ENCODE measurements at regions of chr11 and their contacts with region 1.

Region 1: DNA sequence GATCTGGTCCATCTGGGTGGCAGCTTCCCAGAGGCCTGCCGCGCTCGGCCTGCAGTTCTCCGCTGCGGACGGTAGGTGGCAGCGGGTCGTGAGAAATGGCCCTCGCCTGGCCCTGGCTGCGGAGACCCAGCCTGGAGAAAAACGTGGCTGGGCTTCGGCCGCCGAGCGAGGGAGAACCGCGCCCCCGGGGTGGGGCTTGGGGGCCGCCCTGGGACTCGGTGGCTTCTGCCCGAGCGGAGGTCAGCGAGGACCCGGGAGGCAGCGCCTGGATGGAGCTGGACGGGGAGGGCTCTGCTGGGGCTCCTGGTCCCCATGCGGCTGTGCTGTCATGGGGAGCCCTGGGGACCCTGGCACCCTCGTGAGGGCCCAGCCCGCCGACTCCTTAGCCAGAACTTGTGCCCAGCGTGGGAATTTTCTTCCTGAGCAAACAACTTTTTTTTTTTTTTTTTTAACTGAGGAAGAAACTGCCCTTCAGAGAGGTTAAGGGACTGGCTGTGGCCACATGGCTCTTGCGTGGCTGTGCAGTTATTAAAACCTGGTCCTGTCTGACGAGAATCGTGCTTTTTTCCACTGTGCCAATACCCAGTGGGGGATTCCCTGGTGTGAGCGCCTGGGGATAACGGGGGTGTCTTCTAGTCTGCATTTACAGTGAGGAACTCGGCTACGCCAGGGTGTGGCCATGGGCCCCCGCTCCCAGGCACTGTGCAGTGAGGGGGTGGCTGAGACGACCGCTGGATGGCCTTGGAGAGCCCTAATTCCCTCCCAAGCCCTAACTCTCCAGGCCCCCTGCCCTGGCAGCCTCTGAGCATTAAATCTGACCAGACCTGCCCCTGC is 535.6 kb downstream of the INSC start:
- DNase-seq: peak; percentile 86 to 99
- H3K4me3 ChIP-seq: peak overlapping the region in 3 of 4 experiments; percentile 16 to 50 (median 24); a peak in 4 of 8 replicates
- H3K27ac ChIP-seq: no peak overlapping the region
- H3K4me1 ChIP-seq: peaks cover 3 to 13% (median 4%) of the 10 kb centered on the region in 4 experiments
- H3K27me3 ChIP-seq: peaks cover 0 to 4% (median 0%) of the 10 kb centered on the region in 4 experiments; a peak in 1 of 7 replicates
- CTCF ChIP-seq: peak; percentile 92 to 94 (median 92)
- EP300 ChIP-seq: peak in 1 of 2 experiments; percentile 84; a peak in 1 of 3 replicates
- POLR2A ChIP-seq: 0 out of 3 replicates have a peak, but pooled peaks of 1 of the 2 experiments have one; percentile 40
- RAD21 ChIP-seq: peak; percentile 89 to 93

Region 2: DNA sequence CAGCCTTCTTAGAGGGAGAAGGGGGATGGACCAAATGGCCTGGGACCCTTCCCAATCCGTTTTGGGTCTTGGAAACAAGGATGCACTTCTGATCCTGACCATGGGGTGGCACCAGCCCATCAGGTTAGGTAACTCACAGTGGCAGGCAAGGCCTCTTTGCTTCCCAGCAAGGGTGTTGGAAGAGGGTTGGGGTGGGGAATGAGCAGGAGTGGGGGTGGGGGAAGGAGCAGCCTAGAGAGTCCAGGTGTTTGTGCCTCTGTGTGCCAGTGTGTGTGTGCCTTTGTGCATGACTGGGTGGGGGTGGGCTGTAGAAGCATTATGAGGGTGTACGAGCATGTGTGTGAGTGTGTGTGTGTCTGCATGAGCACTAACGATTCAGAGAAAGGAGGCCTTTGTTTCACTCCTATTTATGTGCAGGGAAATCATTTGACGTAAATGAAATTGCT is 322.5 kb before region 1 on chr11:
- CTCF ChIA-PET with region 1: interaction called, 11 read pairs
- POLR2A ChIA-PET with region 1: no interaction called
- DNase-seq: peak; percentile 60 to 96
- H3K4me3 ChIP-seq: no peak overlapping the region
- H3K27ac ChIP-seq: no peak overlapping the region
- H3K4me1 ChIP-seq: peaks cover 0 to 3% (median 1%) of the 10 kb centered on the region in 4 experiments; a peak in 2 of 7 replicates
- H3K27me3 ChIP-seq: no peaks in the 10 kb centered on the region; a peak in 2 of 7 replicates
- CTCF ChIP-seq: peak; percentile 86 to 90 (median 89)
- EP300 ChIP-seq: no peak
- POLR2A ChIP-seq: no peak
- RAD21 ChIP-seq: peak; percentile 98 to 99

Region 3: DNA sequence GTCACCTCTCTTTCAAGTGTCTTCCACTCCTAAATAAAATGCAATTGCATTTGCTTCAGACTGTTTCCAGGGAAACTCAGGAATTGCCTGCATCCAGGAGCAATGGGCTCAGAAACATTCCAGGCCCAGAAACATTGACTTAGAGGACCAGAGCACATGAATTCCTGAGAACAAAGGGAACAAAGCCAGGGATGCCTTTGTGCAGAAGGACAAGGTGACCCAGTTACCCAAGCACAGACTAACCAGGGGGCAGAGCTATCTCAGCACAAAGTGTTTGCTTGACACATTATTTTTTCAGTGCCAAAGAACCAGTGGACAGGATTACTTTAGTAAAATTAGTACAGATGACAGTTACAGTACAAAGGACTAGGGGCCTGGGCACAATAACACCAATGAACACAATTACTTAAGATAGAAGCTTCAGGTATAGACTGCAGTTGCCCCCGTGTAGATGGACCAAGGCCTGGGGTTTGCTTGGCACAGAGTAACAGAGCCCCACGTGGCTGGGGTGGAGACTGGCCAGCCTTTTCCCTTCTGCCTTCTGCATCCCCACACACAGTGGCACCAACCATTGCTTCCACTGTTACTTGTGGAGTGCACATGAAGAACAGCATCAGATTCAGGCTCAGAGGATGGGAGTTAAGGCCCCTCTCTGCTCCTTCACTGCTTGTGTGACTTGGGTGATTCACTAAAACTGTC is 34.8 kb before region 1 on chr11:
- CTCF ChIA-PET with region 1: interaction called, 11 read pairs
- POLR2A ChIA-PET with region 1: no interaction called
- DNase-seq: no peak
- H3K4me3 ChIP-seq: no peak overlapping the region
- H3K27ac ChIP-seq: no peak overlapping the region
- H3K4me1 ChIP-seq: no peaks in the 10 kb centered on the region
- H3K27me3 ChIP-seq: no peaks in the 10 kb centered on the region
- CTCF ChIP-seq: no peak
- EP300 ChIP-seq: no peak
- POLR2A ChIP-seq: no peak
- RAD21 ChIP-seq: peak in 1 of 2 experiments; percentile 20; a peak in 1 of 4 replicates

Region 4: GRCh38 chr11:15629690-15630321 is 20.5 kb before region 1 on chr11:
- CTCF ChIA-PET with region 1: interaction called, 79 read pairs
- POLR2A ChIA-PET with region 1: no interaction called
- DNase-seq: peak in 1 of 2 experiments; percentile 78
- H3K4me3 ChIP-seq: no peak overlapping the region
- H3K27ac ChIP-seq: no peak overlapping the region
- H3K4me1 ChIP-seq: peaks cover 0 to 4% (median 3%) of the 10 kb centered on the region in 4 experiments; a peak in 2 of 7 replicates
- H3K27me3 ChIP-seq: no peaks in the 10 kb centered on the region
- CTCF ChIP-seq: peak in 2 of 3 experiments; percentile 51 to 62; a peak in 3 of 4 replicates
- EP300 ChIP-seq: no peak
- POLR2A ChIP-seq: no peak
- RAD21 ChIP-seq: peak; percentile 40 to 60; a peak in 3 of 4 replicates

Region 5: GRCh38 chr11:15663777-15664218 is 13.5 kb after region 1 on chr11:
- CTCF ChIA-PET with region 1: interaction called, 10 read pairs
- POLR2A ChIA-PET with region 1: no interaction called
- DNase-seq: peak in 1 of 2 experiments; percentile 59
- H3K4me3 ChIP-seq: no peak overlapping the region
- H3K27ac ChIP-seq: no peak overlapping the region
- H3K4me1 ChIP-seq: peaks cover 0 to 7% (median 4%) of the 10 kb centered on the region in 4 experiments; a peak in 4 of 7 replicates
- H3K27me3 ChIP-seq: no peaks in the 10 kb centered on the region
- CTCF ChIP-seq: no peak
- EP300 ChIP-seq: no peak
- POLR2A ChIP-seq: no peak
- RAD21 ChIP-seq: no peak

Region 6: GRCh38 chr11:15750535-15751308 is 100.4 kb after region 1 on chr11:
- CTCF ChIA-PET with region 1: interaction called, 12 read pairs
- POLR2A ChIA-PET with region 1: no interaction called
- DNase-seq: no peak
- H3K4me3 ChIP-seq: no peak overlapping the region
- H3K27ac ChIP-seq: no peak overlapping the region
- H3K4me1 ChIP-seq: no peaks in the 10 kb centered on the region
- H3K27me3 ChIP-seq: no peaks in the 10 kb centered on the region
- CTCF ChIP-seq: no peak
- EP300 ChIP-seq: no peak
- POLR2A ChIP-seq: no peak
- RAD21 ChIP-seq: no peak

Region 7: GRCh38 chr11:15770798-15771414 is 120.6 kb after region 1 on chr11:
- CTCF ChIA-PET with region 1: interaction called, 28 read pairs
- POLR2A ChIA-PET with region 1: no interaction called
- DNase-seq: peak; percentile 13 to 84
- H3K4me3 ChIP-seq: no peak overlapping the region
- H3K27ac ChIP-seq: no peak overlapping the region
- H3K4me1 ChIP-seq: no peaks in the 10 kb centered on the region
- H3K27me3 ChIP-seq: no peaks in the 10 kb centered on the region
- CTCF ChIP-seq: peak; percentile 69 to 85 (median 71)
- EP300 ChIP-seq: no peak
- POLR2A ChIP-seq: no peak
- RAD21 ChIP-seq: peak; percentile 59 to 72

Measured in H1 (cell line).